Left cardiac atrium (tissue), 4 donors: ENCODE measurements at regions of chr11 and their contacts with region 1.

Region 1: DNA sequence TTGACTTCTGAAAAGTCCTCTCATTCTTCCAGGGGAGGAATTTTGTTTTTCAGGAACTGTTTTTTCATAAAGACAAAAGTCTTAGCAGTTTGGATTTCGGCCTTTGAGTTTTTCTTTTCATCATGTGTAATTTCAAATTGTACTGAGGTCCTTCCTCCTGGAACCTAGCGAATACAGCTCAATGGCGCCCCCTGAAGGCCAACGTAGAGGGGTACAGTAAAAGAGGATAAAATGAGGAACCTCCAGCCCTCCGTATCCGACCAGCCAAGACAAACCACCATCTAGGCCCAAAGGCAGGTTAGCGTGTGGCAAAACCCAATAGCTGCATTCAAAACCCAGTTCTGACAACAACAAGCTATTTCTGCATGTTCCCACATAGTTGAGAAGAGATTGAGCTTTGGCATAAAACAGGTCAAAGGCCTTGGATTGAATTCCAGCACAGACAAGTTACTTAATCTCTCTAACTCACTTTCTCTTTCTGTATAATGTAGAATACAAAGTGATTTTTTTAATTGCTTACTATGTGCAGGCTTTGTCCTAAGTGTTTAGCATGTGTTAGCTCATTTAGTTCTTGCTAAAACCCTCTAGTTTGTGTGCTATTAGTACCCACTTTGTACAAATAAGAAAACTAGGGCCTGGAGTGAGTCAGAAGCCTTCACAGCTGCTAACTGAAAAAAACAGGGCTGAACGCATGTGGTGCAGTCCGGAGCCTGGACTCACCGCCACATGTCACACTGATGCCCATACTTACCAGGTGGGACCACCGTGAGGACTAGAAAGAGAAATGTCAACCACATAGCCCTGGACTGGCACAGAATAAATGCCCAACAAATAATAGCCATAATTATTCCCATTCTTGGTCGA is 43.2 kb upstream of the ETS1 start:
- DNase-seq: peak; percentile 90
- ATAC-seq: peak; percentile 90 to 92

Region 2: GRCh38 chr11:128157423-128158298 is 472.9 kb before region 1 on chr11:
- intact Hi-C with region 1: loop called in 1 of 2 experiments (anchors 5 kb)
- DNase-seq: peak; percentile 29
- ATAC-seq: peak; percentile 83 to 88

Region 3: DNA sequence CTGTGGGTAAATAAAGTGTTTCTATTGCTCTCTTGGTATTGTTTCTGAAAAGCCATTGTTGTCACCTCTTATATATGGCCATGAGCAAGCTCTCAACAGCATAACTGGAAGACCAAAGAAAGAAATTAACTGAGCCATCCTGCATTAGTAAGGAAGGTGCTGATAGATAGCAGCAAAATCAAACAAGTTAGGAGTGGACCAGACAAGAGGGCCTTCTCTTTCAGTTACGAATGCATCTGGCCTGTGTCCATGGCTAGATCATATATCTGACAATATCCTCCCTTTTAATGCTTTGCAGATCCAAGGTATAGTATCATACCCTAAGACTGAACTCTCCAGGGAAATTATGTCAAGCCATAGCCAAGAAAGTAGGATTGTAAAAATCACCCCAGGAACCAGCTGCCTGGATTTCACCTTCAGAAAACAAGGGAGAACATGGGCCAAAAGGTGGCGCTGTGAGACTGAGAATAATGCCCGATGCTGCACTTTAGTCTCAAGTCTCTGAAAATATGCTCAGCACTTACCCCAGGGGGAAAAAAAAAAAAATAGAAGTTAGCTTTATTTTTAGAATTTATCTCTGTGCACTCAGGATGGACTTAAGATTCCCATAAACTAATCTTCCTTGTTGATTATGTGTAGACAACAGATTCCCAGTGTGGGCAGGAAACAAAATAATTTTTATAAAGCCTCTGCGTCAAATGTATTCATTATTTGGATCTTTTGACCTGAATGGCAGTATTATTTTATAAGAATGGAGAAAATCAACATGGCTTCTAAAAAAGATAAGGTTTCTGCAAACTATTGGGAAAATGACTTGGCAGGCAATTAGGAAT is 458.3 kb before region 1 on chr11:
- intact Hi-C with region 1: loop called (anchors 2 to 5 kb)
- DNase-seq: peak; percentile 85
- ATAC-seq: peak; percentile 83 to 91

Region 4: GRCh38 chr11:128342511-128343134 is 288.0 kb before region 1 on chr11:
- intact Hi-C with region 1: no loop called
- DNase-seq: peak; percentile 64
- ATAC-seq: peak; percentile 70 to 89

Region 5: GRCh38 chr11:128506999-128507611 is 123.5 kb before region 1 on chr11:
- intact Hi-C with region 1: no loop called
- DNase-seq: peak; percentile 88
- ATAC-seq: peak; percentile 88 to 94

Region 6: GRCh38 chr11:128831174-128832120 is 200.8 kb after region 1 on chr11:
- intact Hi-C with region 1: loop called in 1 of 2 experiments (anchors 5 kb)
- DNase-seq: peak; percentile 73
- ATAC-seq: peak; percentile 76 to 78